Caco-2 (cell line): ENCODE measurements at regions of chr5 and their contacts with region 1.

Region 1: DNA sequence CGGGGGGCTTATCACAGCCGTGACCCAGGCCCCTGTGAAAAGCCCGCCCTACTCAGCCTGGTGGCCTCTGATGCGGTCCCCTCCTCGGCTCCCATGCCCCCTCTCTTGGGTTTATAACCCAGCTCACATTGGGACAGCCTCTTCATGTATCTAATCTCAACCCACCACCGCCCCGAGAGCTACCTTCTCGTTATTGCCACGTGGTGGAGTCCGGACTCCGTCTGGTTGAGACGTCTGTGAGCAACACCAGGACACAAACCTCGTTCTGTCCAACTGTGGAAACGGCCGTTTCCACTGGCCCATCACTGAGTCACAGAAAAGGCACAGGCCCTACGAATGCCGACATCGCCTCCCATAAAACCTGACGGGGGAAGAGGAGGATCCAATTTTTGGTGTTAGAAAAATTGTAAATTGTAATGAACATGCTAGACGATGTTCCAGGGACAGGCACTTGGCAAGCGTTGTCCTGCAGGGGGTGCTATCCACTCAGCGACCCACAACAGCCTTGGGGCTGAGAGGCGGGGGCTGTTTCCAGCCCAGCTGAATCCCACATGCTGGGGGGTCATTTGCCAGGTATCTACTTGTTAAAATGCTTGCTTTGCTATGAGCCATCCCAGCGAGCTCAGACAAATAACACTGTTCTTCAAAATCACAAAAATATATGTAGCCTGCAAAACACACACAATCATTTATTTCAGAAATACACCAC is 37.3 kb upstream of the N4BP3 start:
- DNase-seq: peak; percentile 70 to 83
- H3K4me3 ChIP-seq: 0 out of 2 replicates have a peak overlapping the region, but pooled peaks have one; percentile 6
- H3K4me3 Mint-ChIP-seq: peak overlapping the region; percentile 30
- H3K27ac Mint-ChIP-seq: no peak overlapping the region
- H3K4me1 ChIP-seq: no peaks in the 10 kb centered on the region
- H3K4me1 Mint-ChIP-seq: peaks cover 6% of the 10 kb centered on the region
- H3K27me3 ChIP-seq: peaks cover 1% of the 10 kb centered on the region; the same call in 1 of the 2 replicates
- H3K27me3 Mint-ChIP-seq: no peaks in the 10 kb centered on the region
- CTCF ChIP-seq: peak; percentile 87 to 89

Region 2: GRCh38 chr5:178106556-178107250 is 30.7 kb after region 1 on chr5:
- CTCF ChIA-PET with region 1: interaction called, 26 read pairs
- POLR2A ChIA-PET with region 1: no interaction called
- intact Hi-C with region 1: loop called (anchors 5 kb)
- DNase-seq: no peak
- H3K4me3 ChIP-seq: no peak overlapping the region
- H3K4me3 Mint-ChIP-seq: no peak overlapping the region
- H3K27ac Mint-ChIP-seq: no peak overlapping the region
- H3K4me1 ChIP-seq: no peaks in the 10 kb centered on the region
- H3K4me1 Mint-ChIP-seq: peaks cover 6% of the 10 kb centered on the region
- H3K27me3 ChIP-seq: no peaks in the 10 kb centered on the region
- H3K27me3 Mint-ChIP-seq: peaks cover 5% of the 10 kb centered on the region
- CTCF ChIP-seq: no peak

Region 3: DNA sequence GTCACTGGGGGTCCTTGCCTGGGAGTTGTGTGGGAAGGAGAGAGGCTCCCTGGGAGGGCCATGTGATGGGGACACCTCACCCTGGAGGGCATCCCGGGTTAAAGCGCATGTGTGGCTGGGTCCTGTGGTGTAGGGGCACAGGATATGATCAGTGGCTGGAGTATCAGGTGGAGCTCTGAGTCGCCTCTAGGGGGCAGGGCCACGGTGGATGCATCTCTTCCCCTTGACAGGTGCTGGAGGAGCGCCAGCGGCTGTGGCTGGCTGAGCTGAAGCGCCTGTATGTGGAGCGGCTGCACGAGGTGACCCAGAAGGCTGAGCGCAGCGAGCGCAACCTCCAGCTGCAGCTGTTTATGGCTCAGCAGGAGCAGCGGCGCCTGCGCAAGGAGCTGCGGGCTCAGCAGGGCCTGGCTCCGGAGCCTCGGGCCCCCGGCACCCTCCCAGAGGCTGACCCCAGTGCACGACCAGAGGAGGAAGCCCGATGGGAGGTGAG is 44.9 kb after region 1 on chr5:
- CTCF ChIA-PET with region 1: interaction called, 15 read pairs
- POLR2A ChIA-PET with region 1: no interaction called
- intact Hi-C with region 1: no loop called
- DNase-seq: peak; percentile 56 to 57
- H3K4me3 ChIP-seq: no peak overlapping the region
- H3K4me3 Mint-ChIP-seq: no peak overlapping the region
- H3K27ac Mint-ChIP-seq: no peak overlapping the region
- H3K4me1 ChIP-seq: peaks cover 12% of the 10 kb centered on the region
- H3K4me1 Mint-ChIP-seq: no peaks in the 10 kb centered on the region
- H3K27me3 ChIP-seq: no peaks in the 10 kb centered on the region
- H3K27me3 Mint-ChIP-seq: no peaks in the 10 kb centered on the region
- CTCF ChIP-seq: peak; percentile 24 to 47

Region 4: DNA sequence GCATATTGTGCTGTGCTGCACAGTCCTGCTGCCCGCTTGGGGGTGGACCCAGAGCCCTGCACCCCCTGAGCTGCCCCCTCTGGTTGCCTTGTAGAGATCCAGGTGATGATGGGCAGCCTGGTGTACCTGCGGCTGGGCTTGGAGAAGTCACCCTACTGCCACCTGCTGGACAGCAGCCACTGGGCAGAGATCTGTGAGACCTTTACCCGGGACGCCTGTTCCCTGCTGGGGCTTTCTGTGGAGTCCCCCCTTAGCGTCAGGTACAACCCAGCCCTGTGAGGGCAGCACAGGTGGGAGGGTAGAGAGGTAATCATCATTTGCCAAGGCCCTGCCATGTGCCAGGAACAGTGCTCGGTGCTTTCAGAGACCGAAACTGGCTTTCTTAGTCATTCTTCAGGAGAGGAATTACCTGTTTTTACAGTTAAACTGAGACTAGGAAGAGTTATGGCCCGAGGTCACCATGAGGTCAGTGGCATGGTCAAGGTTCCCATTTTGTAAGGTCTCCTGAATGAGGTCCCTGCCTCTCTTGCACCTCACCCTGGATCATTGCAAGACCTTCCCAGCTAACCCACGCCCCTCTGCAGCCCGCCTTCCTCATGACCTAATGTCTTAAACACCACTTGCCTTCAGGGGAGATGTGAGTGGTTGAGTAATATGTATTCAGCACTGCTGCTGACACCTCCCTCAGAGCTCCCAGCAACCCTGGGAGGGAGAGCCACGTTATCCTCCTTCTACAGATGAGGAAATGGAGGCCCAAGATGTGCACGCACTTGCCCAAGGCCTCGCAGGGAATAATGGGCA is 70.2 kb after region 1 on chr5:
- CTCF ChIA-PET with region 1: interaction called, 45 read pairs
- POLR2A ChIA-PET with region 1: interaction called, 5 read pairs
- intact Hi-C with region 1: loop called (anchors 1 kb)
- DNase-seq: peak; percentile 86
- H3K4me3 ChIP-seq: no peak overlapping the region
- H3K4me3 Mint-ChIP-seq: no peak overlapping the region
- H3K27ac Mint-ChIP-seq: no peak overlapping the region
- H3K4me1 ChIP-seq: peaks cover 3% of the 10 kb centered on the region; the same call in 1 of the 2 replicates
- H3K4me1 Mint-ChIP-seq: no peaks in the 10 kb centered on the region
- H3K27me3 ChIP-seq: no peaks in the 10 kb centered on the region
- H3K27me3 Mint-ChIP-seq: no peaks in the 10 kb centered on the region
- CTCF ChIP-seq: peak; percentile 80 to 95

Region 5: DNA sequence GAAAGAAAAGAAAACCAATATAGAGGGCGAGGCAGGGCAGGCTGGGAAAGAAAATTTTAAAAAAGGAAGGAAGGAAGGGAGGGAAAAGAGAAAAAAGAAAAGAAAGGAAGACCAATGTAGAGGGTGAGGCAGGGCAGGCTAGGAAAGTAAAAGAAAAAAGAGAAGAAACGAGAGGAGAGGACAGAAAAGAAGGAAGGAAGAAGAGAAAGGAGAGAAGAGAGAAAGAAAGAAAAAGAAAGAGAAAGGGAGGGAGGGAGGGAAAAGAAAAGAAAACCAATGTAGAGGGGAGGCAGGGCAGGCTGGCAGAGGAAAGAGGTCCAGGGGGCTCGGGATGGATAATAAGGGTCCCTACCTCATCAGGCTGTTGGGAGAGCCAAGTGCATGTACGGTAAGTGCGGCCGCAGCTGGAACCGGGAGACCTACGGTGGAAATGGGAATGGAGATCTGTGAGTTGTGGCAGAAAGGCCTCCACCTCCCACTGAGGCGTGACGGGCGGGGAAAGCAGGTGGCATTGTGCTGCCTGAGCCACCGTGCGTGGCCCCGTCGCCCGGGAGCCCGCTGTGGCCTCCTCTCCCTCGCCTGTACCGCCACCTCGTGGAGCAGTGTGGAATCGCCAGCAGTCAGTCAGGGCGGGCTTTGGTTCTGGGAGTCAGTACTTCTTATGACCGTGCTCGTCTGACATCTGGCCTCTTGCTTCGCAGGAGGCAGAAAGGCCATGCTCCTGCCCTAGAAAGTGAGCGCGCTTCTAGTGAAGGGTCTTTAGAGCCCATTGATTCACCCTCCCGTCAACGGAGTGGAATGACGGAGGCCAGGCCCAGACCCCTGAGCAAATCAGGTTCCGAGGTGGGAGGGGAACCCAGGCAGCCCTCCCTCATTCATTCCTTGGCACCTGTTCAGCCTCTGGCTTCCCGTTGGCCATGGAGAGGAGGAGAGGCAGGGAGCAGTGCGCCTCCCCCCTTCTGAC is 88.1 kb after region 1 on chr5:
- CTCF ChIA-PET with region 1: interaction called, 9 read pairs
- POLR2A ChIA-PET with region 1: no interaction called
- intact Hi-C with region 1: loop called (anchors 1 kb)
- DNase-seq: peak; percentile 84 to 92
- H3K4me3 ChIP-seq: no peak overlapping the region
- H3K4me3 Mint-ChIP-seq: peak overlapping the region; percentile 24
- H3K27ac Mint-ChIP-seq: no peak overlapping the region
- H3K4me1 ChIP-seq: 0 out of 2 replicates have a peak, but pooled peaks cover 4% of the 10 kb centered on the region
- H3K4me1 Mint-ChIP-seq: peaks cover 7% of the 10 kb centered on the region
- H3K27me3 ChIP-seq: no peaks in the 10 kb centered on the region; the same call in 1 of the 2 replicates
- H3K27me3 Mint-ChIP-seq: peaks cover 14% of the 10 kb centered on the region
- CTCF ChIP-seq: peak; percentile 96 to 98

Region 6: DNA sequence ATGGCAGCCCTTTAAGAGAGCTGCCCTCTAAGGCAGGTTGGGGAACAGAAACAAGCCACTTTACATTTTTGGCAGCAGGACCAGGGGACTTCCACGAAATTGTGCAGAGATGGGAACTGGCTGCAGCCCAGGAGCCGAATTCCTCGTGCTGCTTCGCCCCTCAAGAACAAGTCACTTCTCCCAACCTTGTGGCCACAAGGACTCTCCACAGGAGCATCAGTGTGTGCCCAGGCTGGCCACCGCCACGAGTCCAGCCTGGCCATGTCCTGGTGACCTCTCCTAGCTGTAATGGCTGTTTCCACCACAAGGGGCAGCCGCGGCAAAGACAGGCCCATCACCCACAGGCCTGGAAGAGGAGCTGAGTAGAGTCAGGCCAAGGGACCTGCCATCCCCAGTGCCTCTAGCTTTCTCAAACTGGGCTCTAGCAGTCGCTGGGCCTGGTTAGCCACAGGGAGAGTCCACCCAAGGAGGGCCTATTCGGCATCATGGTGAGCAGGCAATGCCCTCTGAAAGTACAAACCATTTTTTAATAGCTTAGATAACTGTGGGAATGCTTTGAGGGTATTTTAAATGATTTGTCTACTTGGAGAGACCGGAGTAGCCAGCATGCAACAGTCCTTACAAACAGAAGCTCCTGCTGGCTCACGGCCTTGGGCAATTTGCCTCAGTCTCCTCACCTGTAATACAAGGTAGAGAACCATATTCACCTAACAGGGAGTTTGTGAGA is 385.2 kb after region 1 on chr5:
- CTCF ChIA-PET with region 1: no interaction called
- POLR2A ChIA-PET with region 1: no interaction called
- intact Hi-C with region 1: no loop called
- DNase-seq: peak; percentile 71 to 83
- H3K4me3 ChIP-seq: no peak overlapping the region
- H3K4me3 Mint-ChIP-seq: no peak overlapping the region
- H3K27ac Mint-ChIP-seq: no peak overlapping the region
- H3K4me1 ChIP-seq: peaks cover 7% of the 10 kb centered on the region; the same call in 1 of the 2 replicates
- H3K4me1 Mint-ChIP-seq: peaks cover 7% of the 10 kb centered on the region
- H3K27me3 ChIP-seq: no peaks in the 10 kb centered on the region
- H3K27me3 Mint-ChIP-seq: no peaks in the 10 kb centered on the region
- CTCF ChIP-seq: peak; percentile 83 to 87